Mammary epithelial cell (primary cell): ENCODE measurements at regions of chr5 and their contacts with region 1.

Region 1: GRCh38 chr5:88729084-88729828 is 153.7 kb downstream of the MEF2C start:
- DNase-seq: peak; percentile 55
- H3K4me3 ChIP-seq: no peak overlapping the region
- H3K27ac ChIP-seq: no peak overlapping the region
- H3K4me1 ChIP-seq: no peaks in the 10 kb centered on the region
- H3K27me3 ChIP-seq: peaks cover 2% of the 10 kb centered on the region
- CTCF ChIP-seq: peak; percentile 69 to 77

Region 2: GRCh38 chr5:89729623-89730301 is 1000.5 kb after region 1 on chr5:
- CTCF ChIA-PET with region 1: interaction called, 14 read pairs
- dilution Hi-C with region 1: loop called (anchors 10 kb)
- in situ Hi-C with region 1: loop called in 1 of 2 experiments (anchors 25 kb)
- intact Hi-C with region 1: loop called (anchors 1 kb)
- DNase-seq: peak; percentile 8
- H3K4me3 ChIP-seq: no peak overlapping the region
- H3K27ac ChIP-seq: no peak overlapping the region
- H3K4me1 ChIP-seq: no peaks in the 10 kb centered on the region
- H3K27me3 ChIP-seq: peaks cover 2% of the 10 kb centered on the region
- CTCF ChIP-seq: peak; percentile 19 to 56

Region 3: GRCh38 chr5:90161414-90161813 is 1432.2 kb after region 1 on chr5:
- CTCF ChIA-PET with region 1: no interaction called
- dilution Hi-C with region 1: no loop called
- in situ Hi-C with region 1: loop called in 1 of 2 experiments (anchors 25 kb)
- intact Hi-C with region 1: no loop called
- DNase-seq: no peak
- H3K4me3 ChIP-seq: no peak overlapping the region
- H3K27ac ChIP-seq: no peak overlapping the region
- H3K4me1 ChIP-seq: no peaks in the 10 kb centered on the region
- H3K27me3 ChIP-seq: no peaks in the 10 kb centered on the region
- CTCF ChIP-seq: peak in 1 of 2 donors; percentile 29

Region 4: DNA sequence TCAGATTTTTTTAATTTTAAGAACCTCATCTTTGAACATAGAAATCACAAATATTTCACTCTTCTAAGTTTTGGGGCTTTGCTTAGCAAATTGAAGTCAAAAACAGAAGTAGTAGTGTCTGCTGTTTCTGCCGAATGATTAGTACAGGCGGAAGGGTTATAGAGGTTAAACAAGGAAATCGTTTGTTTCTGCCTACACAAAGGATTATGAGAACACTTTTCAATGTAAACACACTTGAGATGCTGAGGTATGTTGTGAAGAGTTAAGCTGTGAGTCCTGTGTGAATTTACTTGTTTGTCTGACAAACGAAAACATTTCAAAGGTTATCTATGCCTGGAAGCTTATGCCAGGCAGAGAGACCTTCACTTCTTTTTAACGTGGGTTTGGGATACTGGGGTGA is 1455.5 kb after region 1 on chr5:
- CTCF ChIA-PET with region 1: no interaction called
- dilution Hi-C with region 1: no loop called
- in situ Hi-C with region 1: no loop called
- intact Hi-C with region 1: loop called (anchors 2 kb)
- DNase-seq: no peak
- H3K4me3 ChIP-seq: no peak overlapping the region
- H3K27ac ChIP-seq: no peak overlapping the region
- H3K4me1 ChIP-seq: peaks cover 6% of the 10 kb centered on the region
- H3K27me3 ChIP-seq: no peaks in the 10 kb centered on the region
- CTCF ChIP-seq: no peak

Region 5: DNA sequence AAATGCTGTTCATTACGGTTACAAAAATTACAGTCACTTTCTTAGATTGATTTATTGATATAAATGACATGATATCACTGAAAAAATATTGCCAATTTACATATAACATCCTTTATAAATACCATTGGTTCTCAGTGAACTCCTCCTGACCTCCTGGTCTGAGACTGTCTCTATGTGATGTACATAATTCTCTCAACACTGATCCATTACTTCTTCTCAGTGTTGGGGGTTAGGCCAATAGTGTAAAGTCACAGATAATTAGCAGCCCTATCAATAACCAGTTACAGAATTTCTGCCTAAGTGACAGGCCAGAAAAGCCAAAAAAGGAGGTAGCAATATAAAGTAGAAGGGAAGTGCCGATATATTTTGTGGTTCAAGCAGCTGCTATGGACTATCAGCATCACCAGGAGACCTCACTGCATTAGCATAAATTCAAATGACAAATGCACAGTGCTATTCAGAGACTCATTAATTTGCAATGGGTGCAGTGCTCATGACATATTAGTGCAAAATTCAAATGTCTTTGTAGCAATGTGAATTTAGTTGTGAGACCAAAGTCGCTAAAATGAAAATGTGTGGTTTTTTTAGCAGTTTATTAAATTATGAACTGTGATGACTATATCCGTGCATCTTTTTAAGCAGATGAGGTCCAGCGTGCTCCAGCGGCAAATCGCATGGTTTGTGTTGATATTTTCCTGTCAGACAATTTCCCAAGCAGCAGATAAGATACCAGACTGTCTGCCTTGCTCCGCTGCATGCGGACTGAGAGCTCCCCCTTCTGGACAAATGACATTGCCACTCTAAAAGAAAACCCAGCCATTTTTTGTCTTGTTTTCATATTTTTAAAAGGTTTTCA is 1535.7 kb after region 1 on chr5:
- CTCF ChIA-PET with region 1: no interaction called
- dilution Hi-C with region 1: no loop called
- in situ Hi-C with region 1: loop called (anchors 25 kb)
- intact Hi-C with region 1: loop called (anchors 1 kb)
- DNase-seq: peak; percentile 5
- H3K4me3 ChIP-seq: no peak overlapping the region
- H3K27ac ChIP-seq: no peak overlapping the region
- H3K4me1 ChIP-seq: no peaks in the 10 kb centered on the region
- H3K27me3 ChIP-seq: no peaks in the 10 kb centered on the region
- CTCF ChIP-seq: peak; percentile 93 to 96

Region 6: GRCh38 chr5:90386099-90386710 is 1656.9 kb after region 1 on chr5:
- CTCF ChIA-PET with region 1: no interaction called
- dilution Hi-C with region 1: no loop called
- in situ Hi-C with region 1: no loop called
- intact Hi-C with region 1: loop called (anchors 5 kb)
- DNase-seq: no peak
- H3K4me3 ChIP-seq: no peak overlapping the region
- H3K27ac ChIP-seq: no peak overlapping the region
- H3K4me1 ChIP-seq: no peaks in the 10 kb centered on the region
- H3K27me3 ChIP-seq: no peaks in the 10 kb centered on the region
- CTCF ChIP-seq: peak; percentile 45 to 51